ENCODE measurements at regions of chr19 and their contacts with region 1.

Region 1: GRCh38 chr19:8654591-8655339 is 24.3 kb downstream of the NFILZ start:
- DNase-seq: peak; percentile 54 to 78 (median 69)
- H3K4me3 ChIP-seq: peak overlapping the region in 3 of 7 experiments; percentile 28 to 48 (median 42)
- H3K27ac ChIP-seq: no peak overlapping the region
- H3K4me1 ChIP-seq: peaks cover 0 to 38% (median 22%) of the 10 kb centered on the region in 4 experiments
- H3K27me3 ChIP-seq: peaks cover 0 to 9% (median 0%) of the 10 kb centered on the region in 5 experiments

Region 2: GRCh38 chr19:8569066-8569771 is 85.5 kb before region 1 on chr19:
- CTCF ChIA-PET with region 1: no interaction called
- POLR2A ChIA-PET with region 1: no interaction called
- DNase-seq: peak; percentile 85 to 96 (median 95)
- H3K4me3 ChIP-seq: peak overlapping the region in 4 of 7 experiments; percentile 2 to 53 (median 38)
- H3K27ac ChIP-seq: peak overlapping the region in 1 of 2 experiments; percentile 55
- H3K4me1 ChIP-seq: peaks cover 8 to 76% (median 51%) of the 10 kb centered on the region in 4 experiments
- H3K27me3 ChIP-seq: no peaks in the 10 kb centered on the region

Region 3: GRCh38 chr19:8609279-8610040 is 45.3 kb before region 1 on chr19:
- CTCF ChIA-PET with region 1: no interaction called
- POLR2A ChIA-PET with region 1: no interaction called
- DNase-seq: peak in 2 of 3 donors; percentile 42 to 74
- H3K4me3 ChIP-seq: peak overlapping the region; percentile 28 to 93 (median 87)
- H3K27ac ChIP-seq: no peak overlapping the region
- H3K4me1 ChIP-seq: peaks cover 0 to 35% (median 30%) of the 10 kb centered on the region in 4 experiments
- H3K27me3 ChIP-seq: no peaks in the 10 kb centered on the region

Region 4: DNA sequence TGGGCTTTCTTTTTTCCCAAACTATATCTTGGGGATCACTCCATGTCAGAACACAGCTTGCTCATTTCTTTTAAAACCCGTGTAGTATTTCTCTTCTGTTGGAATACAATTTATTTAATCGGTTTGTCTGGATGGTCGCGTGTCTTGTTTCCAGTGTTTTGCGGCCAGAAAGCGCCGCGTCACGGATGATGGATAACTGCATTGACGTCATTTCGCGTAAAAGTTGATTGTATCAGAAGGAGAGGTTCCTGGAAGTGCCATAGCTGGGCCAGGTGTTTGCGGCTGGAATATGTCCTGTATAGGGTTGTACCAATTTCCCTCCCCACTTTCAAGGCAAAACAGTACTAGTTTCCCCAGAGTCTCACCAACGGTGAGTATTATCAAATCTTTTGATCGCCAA is 34.2 kb after region 1 on chr19:
- CTCF ChIA-PET with region 1: interaction called, 117 read pairs
- POLR2A ChIA-PET with region 1: interaction called, 3 read pairs
- DNase-seq: no peak
- H3K4me3 ChIP-seq: no peak overlapping the region
- H3K27ac ChIP-seq: no peak overlapping the region
- H3K4me1 ChIP-seq: peaks cover 0 to 23% (median 1%) of the 10 kb centered on the region in 4 experiments
- H3K27me3 ChIP-seq: peaks cover 0 to 2% (median 0%) of the 10 kb centered on the region in 5 experiments

Region 5: DNA sequence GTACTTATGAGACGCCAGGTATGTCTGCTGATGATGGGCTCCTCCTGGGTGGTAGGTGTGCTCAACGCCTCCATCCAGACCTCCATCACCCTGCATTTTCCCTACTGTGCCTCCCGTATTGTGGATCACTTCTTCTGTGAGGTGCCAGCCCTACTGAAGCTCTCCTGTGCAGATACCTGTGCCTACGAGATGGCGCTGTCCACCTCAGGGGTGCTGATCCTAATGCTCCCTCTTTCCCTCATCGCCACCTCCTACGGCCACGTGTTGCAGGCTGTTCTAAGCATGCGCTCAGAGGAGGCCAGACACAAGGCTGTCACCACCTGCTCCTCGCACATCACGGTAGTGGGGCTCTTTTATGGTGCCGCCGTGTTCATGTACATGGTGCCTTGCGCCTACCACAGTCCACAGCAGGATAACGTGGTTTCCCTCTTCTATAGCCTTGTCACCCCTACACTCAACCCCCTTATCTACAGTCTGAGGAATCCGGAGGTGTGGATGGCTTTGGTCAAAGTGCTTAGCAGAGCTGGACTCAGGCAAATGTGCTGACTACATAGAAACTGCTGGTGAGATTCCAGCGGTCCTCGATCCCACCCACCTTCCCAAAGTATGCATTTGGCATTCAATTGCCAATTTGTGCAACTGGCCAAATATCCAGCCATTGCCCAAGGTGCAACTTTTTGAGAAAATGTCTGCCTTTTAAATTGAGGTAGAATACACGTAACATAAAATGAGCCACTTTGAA is 76.8 kb after region 1 on chr19:
- CTCF ChIA-PET with region 1: no interaction called
- POLR2A ChIA-PET with region 1: no interaction called
- DNase-seq: peak in 2 of 3 donors; percentile 33 to 42
- H3K4me3 ChIP-seq: no peak overlapping the region
- H3K27ac ChIP-seq: no peak overlapping the region
- H3K4me1 ChIP-seq: no peaks in the 10 kb centered on the region
- H3K27me3 ChIP-seq: no peaks in the 10 kb centered on the region

Measured in common myeloid progenitor, CD34-positive (primary cell).